ENCODE measurements at regions of chr18 and their contacts with region 1.

Region 1: DNA sequence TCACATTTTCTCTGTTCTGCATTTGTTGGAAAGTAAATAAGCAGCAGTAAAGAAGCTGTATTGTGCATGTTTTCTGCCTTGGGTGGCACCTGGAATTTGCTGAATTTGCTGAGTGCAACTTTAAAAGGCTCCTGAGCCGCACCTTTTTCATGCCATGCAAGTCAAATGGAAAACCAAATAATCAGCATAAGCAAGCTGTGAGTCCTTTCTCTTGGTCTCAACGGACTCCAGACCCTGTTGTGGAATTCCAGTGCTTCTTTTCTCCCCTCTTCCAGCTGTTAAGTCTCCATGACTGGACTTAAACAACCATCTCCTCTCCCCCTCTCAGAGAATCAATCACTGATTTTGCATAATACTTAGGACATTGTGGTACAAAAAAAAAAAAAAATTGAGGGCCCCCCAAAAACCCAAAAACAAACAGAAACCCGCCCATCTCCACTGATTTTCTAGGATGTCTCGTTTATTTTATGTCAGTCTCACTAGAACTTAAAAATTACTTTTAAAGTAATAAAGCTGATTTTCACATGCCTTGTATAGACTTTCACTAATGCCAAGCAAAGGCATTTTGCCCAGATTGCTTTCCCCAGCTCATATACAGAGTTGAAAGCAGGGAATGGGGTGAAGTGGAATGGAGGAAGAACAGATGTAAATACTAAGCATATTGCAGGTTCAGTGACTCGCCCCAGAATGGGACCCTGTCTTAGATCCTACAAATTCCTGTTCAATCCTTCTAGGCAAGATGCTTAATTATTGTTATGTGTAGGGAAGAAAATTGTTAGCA is 5.1 kb upstream of the CETN1 start:
- DNase-seq: no peak
- H3K4me3 ChIP-seq: no peak overlapping the region
- H3K27ac ChIP-seq: no peak overlapping the region
- H3K4me1 ChIP-seq: no peaks in the 10 kb centered on the region
- H3K27me3 ChIP-seq: no peaks in the 10 kb centered on the region
- CTCF ChIP-seq: no peak
- POLR2A ChIP-seq: no peak

Region 2: GRCh38 chr18:1037776-1038175 is 462.7 kb after region 1 on chr18:
- intact Hi-C with region 1: loop called (anchors 5 kb)
- DNase-seq: no peak
- H3K4me3 ChIP-seq: no peak overlapping the region
- H3K27ac ChIP-seq: no peak overlapping the region
- H3K4me1 ChIP-seq: no peaks in the 10 kb centered on the region
- H3K27me3 ChIP-seq: no peaks in the 10 kb centered on the region
- CTCF ChIP-seq: no peak
- POLR2A ChIP-seq: no peak

Measured in breast epithelium (tissue), 4 donors.